ENCODE measurements at regions of chr3 and their contacts with region 1.

Region 1: DNA sequence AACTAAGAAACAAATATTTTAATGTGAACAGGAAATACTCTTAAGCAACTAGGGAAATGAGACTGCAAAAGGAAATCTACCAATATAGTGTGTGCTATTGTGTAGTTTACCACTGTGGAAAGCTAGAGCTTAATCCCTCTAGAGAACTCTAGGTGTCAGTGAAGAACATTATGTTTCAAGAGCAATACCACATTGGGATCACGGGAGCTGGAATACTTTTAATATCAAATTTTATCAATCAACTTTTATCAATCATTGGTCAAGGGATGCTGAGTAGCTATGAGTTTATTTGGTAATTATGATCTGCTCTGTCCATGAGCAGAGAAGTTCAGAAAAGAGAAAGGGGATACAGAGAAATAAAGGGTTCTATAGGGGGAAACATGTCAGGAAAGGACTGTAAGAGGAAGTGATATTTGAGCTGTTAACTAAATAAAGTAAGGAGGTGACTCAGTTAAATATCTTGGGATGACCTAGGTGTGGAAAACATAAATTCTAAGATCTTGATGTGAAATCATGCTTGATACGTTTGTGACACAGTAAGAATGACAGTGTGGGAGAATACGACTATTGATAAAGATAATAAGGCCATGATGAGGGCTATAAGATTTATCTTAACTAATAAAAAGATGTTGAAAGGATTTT is 762.2 kb upstream of the ALCAM start:
- DNase-seq: no peak
- CTCF ChIP-seq: peak; percentile 7

Region 2: GRCh38 chr3:104297617-104298016 is 306.9 kb before region 1 on chr3:
- in situ Hi-C with region 1: no loop called
- DNase-seq: no peak
- CTCF ChIP-seq: no peak

Region 3: GRCh38 chr3:104711406-104711805 is 106.9 kb after region 1 on chr3:
- in situ Hi-C with region 1: no loop called
- DNase-seq: no peak
- CTCF ChIP-seq: no peak

Region 4: GRCh38 chr3:105014631-105015030 is 410.1 kb after region 1 on chr3:
- in situ Hi-C with region 1: no loop called
- DNase-seq: no peak
- CTCF ChIP-seq: no peak

Region 5: DNA sequence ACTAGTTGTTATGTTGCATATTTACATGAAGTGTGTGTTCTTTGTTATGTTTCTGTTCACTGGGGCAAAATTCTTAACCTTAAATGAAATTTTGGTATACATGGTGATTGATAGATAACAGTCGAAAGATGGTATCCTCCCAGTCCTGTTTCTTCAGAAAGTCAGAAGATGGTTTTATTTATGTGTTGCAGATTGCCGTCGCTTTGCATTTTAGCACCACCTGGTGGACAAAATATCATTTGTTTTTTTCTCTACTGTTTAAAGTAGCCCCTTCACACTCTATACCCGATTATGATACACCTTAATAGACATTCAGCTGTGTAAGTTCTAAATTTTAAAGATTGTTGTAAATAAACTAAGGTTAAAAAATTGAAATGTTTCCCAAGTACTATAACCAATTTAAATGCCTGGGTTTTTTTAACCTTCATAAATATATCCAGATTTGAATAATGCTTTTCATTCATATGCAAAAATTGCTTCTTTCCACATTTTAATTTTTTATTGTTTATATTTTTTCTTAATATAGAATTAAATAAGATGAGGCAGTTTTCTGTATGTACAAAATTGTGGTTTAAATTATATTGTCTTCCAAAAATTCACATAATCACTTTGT is 914.4 kb after region 1 on chr3:
- in situ Hi-C with region 1: loop called (anchors 25 kb)
- DNase-seq: peak; percentile 43
- CTCF ChIP-seq: peak; percentile 53

Measured in GM13977 (cell line).